Endothelial cell of umbilical vein (primary cell): ENCODE measurements at regions of chr19 and their contacts with region 1.

Region 1: DNA sequence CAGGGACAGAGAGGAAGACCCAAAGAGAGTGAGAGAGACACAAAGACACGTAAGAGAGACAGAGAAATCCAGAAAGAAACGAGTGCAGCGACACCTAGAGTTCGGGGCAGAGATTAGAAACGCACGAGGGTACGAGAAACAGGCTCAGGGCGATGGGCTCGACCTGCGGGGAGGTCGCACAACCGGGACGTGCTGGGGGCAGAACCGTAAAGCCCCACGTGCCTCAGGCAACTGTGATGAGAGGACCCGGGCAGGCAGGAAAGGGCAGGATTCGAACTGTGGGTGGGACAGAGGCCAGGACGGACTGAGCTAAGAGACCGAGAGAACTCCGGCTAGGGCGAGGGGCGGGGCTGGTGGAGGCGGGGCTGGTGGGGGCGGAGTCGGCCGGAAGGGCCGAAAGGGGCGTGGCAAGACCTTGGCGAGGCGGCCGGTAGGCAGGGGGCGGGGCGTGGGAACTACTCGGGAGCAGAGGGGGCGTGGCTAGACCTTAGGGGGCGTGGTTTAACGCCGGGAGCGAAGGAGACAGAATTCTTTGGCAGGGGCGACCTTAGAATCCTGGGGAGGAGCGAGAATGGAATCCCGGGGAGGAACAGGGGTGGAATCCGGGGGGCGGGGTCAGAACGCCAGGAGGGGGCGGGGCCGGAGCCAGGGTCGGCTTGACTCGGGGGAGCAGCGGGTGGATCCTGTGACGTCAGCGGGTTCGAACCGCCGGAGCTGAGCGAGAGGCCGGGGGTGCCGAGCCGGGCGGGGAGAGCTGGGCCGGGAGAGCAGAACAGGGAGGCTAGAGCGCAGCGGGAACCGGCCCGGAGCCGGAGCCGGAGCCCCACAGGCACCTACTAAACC is at the start of gene NECTIN2:
- DNase-seq: peak; percentile 99
- H3K4me3 ChIP-seq: peak within 1 kb of the TSS; percentile 69 to 96 (median 83)
- H3K27ac ChIP-seq: peak within 1 kb of the TSS; percentile 99
- H3K4me1 ChIP-seq: peaks cover 35% of the 10 kb centered on the region
- H3K27me3 ChIP-seq: no peaks in the 10 kb centered on the region
- CTCF ChIP-seq: peak; percentile 83 to 85
- POLR2A ChIP-seq: peak; percentile 76
- total RNA-seq, gene NECTIN2: 205 and 211 TPM in 2 replicates

Region 2: GRCh38 chr19:44689056-44689895 is 156.6 kb before region 1 on chr19:
- CTCF ChIA-PET with region 1: interaction called, 10 read pairs
- POLR2A ChIA-PET with region 1: no interaction called
- dilution Hi-C with region 1: no loop called
- intact Hi-C with region 1: loop called (anchors 1 kb)
- DNase-seq: peak; percentile 70
- H3K4me3 ChIP-seq: no peak overlapping the region
- H3K27ac ChIP-seq: no peak overlapping the region
- H3K4me1 ChIP-seq: peaks cover 30% of the 10 kb centered on the region
- H3K27me3 ChIP-seq: no peaks in the 10 kb centered on the region
- CTCF ChIP-seq: peak; percentile 79 to 96
- POLR2A ChIP-seq: no peak

Region 3: GRCh38 chr19:44734986-44735385 is 110.8 kb before region 1 on chr19:
- CTCF ChIA-PET with region 1: no interaction called
- POLR2A ChIA-PET with region 1: no interaction called
- dilution Hi-C with region 1: no loop called
- intact Hi-C with region 1: no loop called
- DNase-seq: no peak
- H3K4me3 ChIP-seq: no peak overlapping the region
- H3K27ac ChIP-seq: no peak overlapping the region
- H3K4me1 ChIP-seq: no peaks in the 10 kb centered on the region
- H3K27me3 ChIP-seq: no peaks in the 10 kb centered on the region
- CTCF ChIP-seq: no peak
- POLR2A ChIP-seq: no peak

Region 4: DNA sequence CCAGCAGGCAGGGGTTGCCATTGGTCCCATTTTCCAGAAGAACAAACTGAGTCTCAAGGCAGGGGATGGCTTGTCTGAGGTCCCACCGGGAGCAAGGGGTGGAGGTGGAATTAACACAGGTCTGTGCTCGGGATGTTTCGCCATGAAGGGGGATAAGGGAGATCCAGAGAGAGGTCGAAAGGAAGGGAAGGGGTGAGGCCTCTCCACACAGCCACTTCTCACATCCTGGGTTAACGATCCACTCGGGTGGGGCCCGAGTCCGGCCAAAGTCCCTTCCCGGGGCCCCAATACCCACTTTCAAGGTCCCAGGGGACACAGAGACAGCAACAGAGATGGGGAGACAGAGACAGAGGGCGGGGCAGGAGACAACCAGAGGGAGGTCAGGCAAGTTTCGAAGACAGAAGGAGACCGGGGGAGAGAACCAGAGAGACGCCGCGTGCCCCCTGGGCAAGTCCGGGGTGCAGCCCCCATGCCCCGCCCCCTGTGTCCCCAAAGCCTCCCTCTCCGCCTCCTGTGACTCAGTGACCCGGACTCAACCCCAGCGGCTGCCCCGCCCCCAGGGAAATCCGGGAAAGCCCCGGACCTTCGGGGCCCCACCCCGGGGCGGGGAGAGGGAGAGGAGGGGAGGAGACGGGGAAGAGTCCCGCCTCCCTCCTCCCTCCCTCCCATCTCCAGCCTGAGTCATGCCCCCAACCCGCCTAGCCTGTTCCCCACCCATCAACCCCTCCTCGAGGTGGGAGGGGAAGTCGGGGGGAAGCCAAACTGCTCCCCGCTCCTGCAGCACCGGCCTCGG is 98.7 kb before region 1 on chr19:
- CTCF ChIA-PET with region 1: no interaction called
- POLR2A ChIA-PET with region 1: no interaction called
- dilution Hi-C with region 1: no loop called
- intact Hi-C with region 1: no loop called
- DNase-seq: peak; percentile 90
- H3K4me3 ChIP-seq: peak overlapping the region in 1 of 3 experiments; percentile 31
- H3K27ac ChIP-seq: peak overlapping the region; percentile 84
- H3K4me1 ChIP-seq: peaks cover 33% of the 10 kb centered on the region
- H3K27me3 ChIP-seq: no peaks in the 10 kb centered on the region
- CTCF ChIP-seq: no peak
- POLR2A ChIP-seq: peak; percentile 33

Region 5: GRCh38 chr19:44782729-44783128 is 63.1 kb before region 1 on chr19:
- CTCF ChIA-PET with region 1: interaction called, 56 read pairs
- POLR2A ChIA-PET with region 1: interaction called, 3 read pairs
- dilution Hi-C with region 1: no loop called
- intact Hi-C with region 1: loop called (anchors 1 kb)
- DNase-seq: no peak
- H3K4me3 ChIP-seq: no peak overlapping the region
- H3K27ac ChIP-seq: no peak overlapping the region
- H3K4me1 ChIP-seq: no peaks in the 10 kb centered on the region
- H3K27me3 ChIP-seq: no peaks in the 10 kb centered on the region
- CTCF ChIP-seq: no peak
- POLR2A ChIP-seq: no peak

Region 6: DNA sequence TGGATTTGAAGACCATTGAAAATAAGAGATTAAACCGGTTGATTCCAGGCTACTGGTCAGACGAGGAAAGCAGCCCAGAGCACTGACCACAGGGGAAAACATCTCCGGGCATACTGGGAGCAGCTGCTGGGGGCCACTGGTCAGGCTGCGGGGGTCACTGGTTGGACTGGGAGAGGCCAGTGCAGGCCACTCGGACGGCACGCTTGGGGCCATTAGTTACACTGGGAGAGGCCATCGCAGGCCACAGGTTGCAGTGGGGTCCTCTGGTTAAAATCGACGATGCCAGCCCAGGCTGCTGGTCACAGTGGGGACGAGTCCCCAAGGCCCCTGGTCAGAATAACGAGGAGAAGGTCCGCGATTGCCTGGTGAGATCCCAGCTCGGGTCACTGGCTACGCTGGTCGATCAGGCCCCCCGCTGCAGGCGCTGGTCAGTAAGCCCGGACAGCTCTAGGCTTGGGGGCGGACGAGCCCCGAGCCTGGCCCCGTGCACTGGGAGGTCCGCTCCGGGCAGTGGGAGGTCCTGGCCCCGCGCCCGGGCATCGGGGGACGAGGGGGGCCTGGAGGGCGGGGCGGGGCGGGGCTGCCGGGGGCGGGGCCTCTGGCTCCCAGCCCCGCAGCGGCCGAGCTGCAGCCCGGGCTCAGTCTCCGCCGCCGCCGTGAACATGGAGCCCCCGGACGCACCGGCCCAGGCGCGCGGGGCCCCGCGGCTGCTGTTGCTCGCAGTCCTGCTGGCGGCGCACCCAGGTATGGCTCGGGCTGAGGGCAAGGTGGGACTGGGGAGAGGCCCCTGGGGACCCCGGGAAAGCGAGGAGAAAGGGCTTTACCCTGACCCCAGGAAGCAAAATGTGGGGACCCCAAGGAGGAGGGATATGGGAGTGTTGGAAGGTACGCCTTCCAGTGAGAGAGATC is 37.1 kb before region 1 on chr19 and contains the start of gene BCAM:
- CTCF ChIA-PET with region 1: interaction called, 7 read pairs
- POLR2A ChIA-PET with region 1: interaction called, 6 read pairs
- dilution Hi-C with region 1: no loop called
- intact Hi-C with region 1: loop called (anchors 2 kb)
- DNase-seq: peak; percentile 49
- H3K4me3 ChIP-seq: peak within 1 kb of the TSS; percentile 60 to 66 (median 64)
- H3K27ac ChIP-seq: no peak within 1 kb of the TSS
- H3K4me1 ChIP-seq: peaks cover 16% of the 10 kb centered on the region
- H3K27me3 ChIP-seq: no peaks in the 10 kb centered on the region
- CTCF ChIP-seq: no peak
- POLR2A ChIP-seq: peak; percentile 68
- total RNA-seq, gene BCAM: 28.5 and 29.0 TPM in 2 replicates

Region 7: DNA sequence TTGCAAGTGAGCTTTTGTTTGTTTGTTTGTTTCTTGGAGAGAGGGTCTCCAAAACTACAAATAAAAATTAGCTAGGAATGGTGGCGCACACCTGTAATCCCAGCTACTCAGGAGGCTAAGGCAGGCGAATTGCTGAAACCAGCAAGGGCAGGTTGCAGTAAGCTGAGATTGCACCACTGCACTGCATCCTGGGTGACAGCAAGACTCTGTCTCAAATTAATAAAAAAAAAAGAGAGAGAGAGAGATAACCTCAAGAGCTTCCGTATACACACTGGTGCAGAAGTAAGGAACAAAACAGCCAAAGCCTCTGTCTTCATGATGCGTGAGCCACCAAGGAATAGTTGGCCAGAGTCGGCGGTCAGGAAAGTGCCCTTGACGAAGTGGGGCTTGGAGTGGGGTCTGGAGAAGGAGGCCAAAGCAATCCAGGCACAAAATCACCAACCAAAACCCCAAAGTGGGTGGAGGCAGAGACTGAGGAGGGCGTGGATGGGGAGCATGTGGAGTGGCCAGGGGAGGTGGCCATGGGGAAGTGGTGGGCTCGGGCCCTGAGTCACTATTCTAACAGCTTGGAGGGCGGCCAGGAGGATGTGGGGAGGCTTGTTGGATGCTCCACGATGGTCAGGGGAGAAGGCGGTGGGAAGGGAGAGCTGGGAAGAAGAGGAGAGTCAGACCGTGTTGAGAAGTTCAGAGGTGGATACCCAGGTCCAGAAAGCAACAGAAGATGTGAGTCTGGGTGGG is 24.1 kb after region 1 on chr19:
- CTCF ChIA-PET with region 1: interaction called, 7 read pairs
- POLR2A ChIA-PET with region 1: interaction called, 4 read pairs
- dilution Hi-C with region 1: no loop called
- intact Hi-C with region 1: loop called (anchors 1 kb)
- DNase-seq: peak; percentile 75
- H3K4me3 ChIP-seq: no peak overlapping the region
- H3K27ac ChIP-seq: peak overlapping the region; percentile 36
- H3K4me1 ChIP-seq: peaks cover 26% of the 10 kb centered on the region
- H3K27me3 ChIP-seq: no peaks in the 10 kb centered on the region
- CTCF ChIP-seq: no peak
- POLR2A ChIP-seq: no peak

Region 8: DNA sequence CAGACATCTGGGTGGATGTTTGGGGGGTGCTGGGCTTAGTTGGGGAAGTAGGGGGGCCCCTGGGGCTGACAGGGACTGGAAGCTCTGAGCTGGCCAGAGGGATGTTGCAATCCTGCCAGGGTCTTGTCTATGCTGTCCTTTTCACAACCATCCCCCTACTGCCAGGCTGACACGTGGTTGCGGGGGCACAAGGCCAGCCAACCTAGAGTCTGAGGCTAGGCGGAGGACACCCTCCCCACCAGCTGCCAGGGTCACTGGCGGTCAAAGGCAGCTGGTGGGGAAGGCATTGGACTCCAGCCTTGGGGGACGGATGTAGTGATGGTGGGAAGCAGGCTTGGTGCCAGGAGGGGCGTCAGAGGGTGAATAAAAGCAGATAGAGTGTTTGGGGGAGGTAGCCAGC is 67.0 kb after region 1 on chr19:
- CTCF ChIA-PET with region 1: no interaction called
- POLR2A ChIA-PET with region 1: no interaction called
- dilution Hi-C with region 1: no loop called
- intact Hi-C with region 1: no loop called
- DNase-seq: no peak
- H3K4me3 ChIP-seq: no peak overlapping the region
- H3K27ac ChIP-seq: no peak overlapping the region
- H3K4me1 ChIP-seq: peaks cover 10% of the 10 kb centered on the region
- H3K27me3 ChIP-seq: no peaks in the 10 kb centered on the region
- CTCF ChIP-seq: no peak
- POLR2A ChIP-seq: no peak

Region 9: DNA sequence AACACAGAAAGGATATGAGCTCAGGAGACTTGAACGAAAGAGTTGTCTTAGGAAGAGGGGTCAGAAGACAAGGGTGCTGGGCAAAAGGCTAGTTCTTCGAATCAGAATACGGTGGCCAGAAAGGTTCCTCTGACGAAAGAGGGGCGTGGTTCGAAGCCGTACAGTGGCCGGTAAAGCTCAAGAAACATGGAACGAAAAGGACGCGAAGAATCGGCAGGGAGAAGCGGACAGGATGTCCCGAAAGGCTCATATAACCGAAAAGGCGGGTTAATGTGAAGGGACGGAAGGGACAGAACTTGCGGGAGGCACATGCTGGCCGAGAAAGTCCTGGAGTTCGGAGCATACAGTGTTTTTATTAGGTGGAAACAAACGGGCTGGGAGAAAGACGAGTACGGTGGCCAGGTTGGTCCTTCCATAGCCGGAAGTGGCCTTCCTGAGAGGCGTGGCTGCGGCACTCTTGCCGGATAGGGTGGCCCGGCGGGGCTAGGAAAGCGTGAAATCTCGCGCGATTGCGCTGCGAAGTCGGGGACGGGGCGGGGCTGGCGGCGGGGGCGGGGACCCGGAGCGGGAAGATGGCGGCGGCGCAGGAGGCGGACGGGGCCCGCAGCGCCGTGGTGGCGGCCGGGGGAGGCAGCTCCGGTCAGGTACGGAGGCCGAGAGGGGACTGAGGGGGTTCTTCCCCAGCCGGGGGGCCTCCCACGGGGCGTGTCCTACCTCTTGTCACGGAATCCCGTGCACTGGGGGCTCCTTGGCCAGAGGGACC is 109.2 kb after region 1 on chr19 and contains the start of gene CLPTM1:
- CTCF ChIA-PET with region 1: interaction called, 3 read pairs
- POLR2A ChIA-PET with region 1: no interaction called
- dilution Hi-C with region 1: no loop called
- intact Hi-C with region 1: loop called (anchors 1 kb)
- DNase-seq: peak; percentile 96
- H3K4me3 ChIP-seq: peak within 1 kb of the TSS; percentile 87 to 95 (median 90)
- H3K27ac ChIP-seq: peak within 1 kb of the TSS; percentile 93
- H3K4me1 ChIP-seq: peaks cover 15% of the 10 kb centered on the region
- H3K27me3 ChIP-seq: no peaks in the 10 kb centered on the region
- CTCF ChIP-seq: no peak
- POLR2A ChIP-seq: peak; percentile 82
- total RNA-seq, gene CLPTM1: 108 and 115 TPM in 2 replicates

Region 10: DNA sequence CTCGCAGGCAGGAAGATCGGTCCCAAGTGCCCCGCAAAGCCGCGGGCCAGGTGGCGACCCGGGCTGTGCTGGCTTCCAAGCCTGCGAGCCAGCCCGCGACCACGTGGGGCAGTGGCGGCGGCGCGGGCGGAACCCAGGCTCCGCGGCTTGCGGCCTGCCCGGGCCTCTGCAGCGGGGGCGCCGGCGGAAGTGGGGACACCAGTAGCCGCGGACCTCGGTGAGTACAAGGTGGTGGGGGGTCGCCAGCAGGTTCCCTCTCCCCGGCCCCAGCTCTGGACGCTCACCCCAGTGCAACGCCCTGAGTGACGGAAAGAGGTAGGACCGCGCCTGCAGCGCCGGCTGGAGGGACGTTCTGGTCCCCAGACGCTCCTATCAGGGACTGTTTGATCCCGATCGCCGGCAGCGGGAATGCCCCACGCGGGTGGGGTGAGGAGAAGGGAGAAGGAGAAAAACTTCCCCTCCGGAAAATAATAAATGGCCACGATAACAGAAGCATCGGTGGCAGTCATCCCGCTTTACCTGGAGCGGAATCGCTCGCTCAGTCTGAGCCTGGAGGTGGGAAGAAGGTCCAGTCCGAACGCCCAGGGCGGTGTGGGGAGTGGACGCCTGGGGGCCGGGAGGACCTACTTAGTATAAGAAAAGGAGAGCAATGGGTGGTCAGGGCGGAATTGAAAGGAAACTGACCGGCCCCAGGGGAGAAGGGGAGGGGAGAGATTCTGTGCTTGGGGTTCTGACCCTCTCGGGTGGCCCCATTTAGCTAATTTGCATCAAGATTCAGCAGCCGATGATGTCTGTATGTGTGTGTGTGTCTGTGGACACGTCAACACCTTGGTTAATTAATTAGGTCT is 233.5 kb after region 1 on chr19 and contains the start of gene GEMIN7:
- CTCF ChIA-PET with region 1: no interaction called
- POLR2A ChIA-PET with region 1: no interaction called
- dilution Hi-C with region 1: no loop called
- intact Hi-C with region 1: no loop called
- DNase-seq: peak; percentile 75
- H3K4me3 ChIP-seq: peak within 1 kb of the TSS; percentile 57 to 79 (median 58)
- H3K27ac ChIP-seq: peak within 1 kb of the TSS; percentile 50
- H3K4me1 ChIP-seq: peaks cover 16% of the 10 kb centered on the region
- H3K27me3 ChIP-seq: no peaks in the 10 kb centered on the region
- CTCF ChIP-seq: peak in 1 of 2 donors; percentile 6
- POLR2A ChIP-seq: no peak
- total RNA-seq, gene GEMIN7: 30.3 and 34.2 TPM in 2 replicates